CD8-positive, alpha-beta T cell (primary cell): ENCODE measurements at regions of chr19 and their contacts with region 1.

Region 1: DNA sequence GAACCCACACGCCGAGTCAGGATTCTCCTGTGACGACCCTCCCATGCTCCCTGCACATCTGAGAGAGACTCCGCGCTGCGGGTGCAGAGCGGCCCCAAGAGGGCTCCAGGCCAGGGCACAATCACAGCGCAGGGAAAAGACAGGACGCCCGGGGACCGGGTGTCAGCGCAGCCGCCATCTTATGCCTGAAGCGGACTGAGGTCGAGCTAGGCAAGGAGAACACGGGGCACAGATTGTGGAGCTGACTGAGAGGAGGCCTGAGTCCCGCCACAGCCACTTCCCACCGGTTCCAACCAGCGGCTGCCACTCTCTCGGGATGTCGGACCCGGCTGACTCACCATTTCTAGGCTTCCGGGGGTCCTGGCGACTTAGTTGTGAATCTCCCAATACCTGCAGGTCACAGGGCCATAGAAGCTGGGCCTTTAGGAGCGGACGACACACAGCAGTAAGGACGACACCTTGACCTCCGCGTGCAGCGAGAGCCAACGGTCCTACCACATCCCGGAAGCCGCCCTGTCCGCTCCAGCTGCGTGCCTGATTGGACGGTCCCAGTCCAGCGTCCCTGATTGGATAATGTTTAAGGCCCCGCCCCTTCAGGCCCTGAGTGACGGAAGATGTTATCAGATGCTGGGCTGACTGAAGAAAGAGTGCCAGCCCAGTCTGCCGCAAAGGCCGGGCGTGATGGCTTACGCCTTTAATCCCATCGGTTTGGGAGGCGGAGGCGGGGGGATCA is at the start of gene ZNF728:
- DNase-seq: peak in 1 of 9 experiments; percentile 3
- ATAC-seq: no peak
- H3K4me3 ChIP-seq: no peak within 1 kb of the TSS
- H3K4me3 Mint-ChIP-seq: no peak within 1 kb of the TSS
- H3K27ac ChIP-seq: no peak within 1 kb of the TSS
- H3K27ac Mint-ChIP-seq: no peak within 1 kb of the TSS
- H3K4me1 ChIP-seq: no peaks in the 10 kb centered on the region
- H3K4me1 Mint-ChIP-seq: no peaks in the 10 kb centered on the region
- H3K27me3 ChIP-seq: no peaks in the 10 kb centered on the region
- H3K27me3 Mint-ChIP-seq: no peaks in the 10 kb centered on the region
- CTCF ChIP-seq: no peak
- total RNA-seq, gene ZNF728: not detected

Region 2: DNA sequence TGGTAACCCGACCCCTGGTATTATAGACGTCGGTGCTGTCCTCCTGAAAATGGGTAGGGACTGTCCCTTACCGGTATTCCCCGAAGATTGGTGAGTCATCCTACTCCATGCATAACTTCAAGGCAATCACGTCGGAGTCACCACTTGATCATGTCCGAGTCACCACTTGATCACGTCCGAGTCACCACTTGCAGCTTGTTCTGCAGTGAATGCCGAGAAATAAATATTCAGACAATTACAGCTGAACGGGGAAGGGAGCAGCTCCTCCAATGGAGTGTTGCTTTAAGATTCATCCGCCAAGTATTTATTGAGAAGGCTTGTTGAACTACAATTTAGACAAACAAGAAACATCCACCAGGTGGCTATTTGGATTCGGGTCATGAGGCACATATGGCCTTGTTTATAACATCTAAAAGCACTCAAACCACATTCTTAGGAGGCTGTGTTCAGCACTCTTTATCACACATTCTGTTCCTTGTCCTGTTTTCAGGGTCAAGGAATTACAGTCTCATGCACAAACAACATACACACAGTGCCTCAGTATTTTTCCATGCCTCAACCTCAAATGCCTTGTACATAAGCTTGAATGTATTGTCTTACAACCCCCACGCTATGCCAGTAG is 954.9 kb after region 1 on chr19:
- CTCF ChIA-PET with region 1: no interaction called
- POLR2A ChIA-PET with region 1: no interaction called
- intact Hi-C with region 1: loop called in 1 of 2 experiments (anchors 5 kb)
- DNase-seq: no peak
- ATAC-seq: no peak
- H3K4me3 ChIP-seq: no peak overlapping the region
- H3K4me3 Mint-ChIP-seq: no peak overlapping the region
- H3K27ac ChIP-seq: no peak overlapping the region
- H3K27ac Mint-ChIP-seq: no peak overlapping the region
- H3K4me1 ChIP-seq: no peaks in the 10 kb centered on the region
- H3K4me1 Mint-ChIP-seq: no peaks in the 10 kb centered on the region
- H3K27me3 ChIP-seq: no peaks in the 10 kb centered on the region
- H3K27me3 Mint-ChIP-seq: no peaks in the 10 kb centered on the region
- CTCF ChIP-seq: no peak